ENCODE measurements at regions of chr4 and their contacts with region 1.

Region 1: GRCh38 chr4:16196478-16197393 is 29.5 kb downstream of the TAPT1 start:
- DNase-seq: no peak
- CTCF ChIP-seq: peak; percentile 33

Region 2: GRCh38 chr4:16183604-16184003 is 13.1 kb before region 1 on chr4:
- CTCF ChIA-PET with region 1: interaction called, 12 read pairs
- POLR2A ChIA-PET with region 1: no interaction called
- DNase-seq: no peak
- CTCF ChIP-seq: no peak

Region 3: DNA sequence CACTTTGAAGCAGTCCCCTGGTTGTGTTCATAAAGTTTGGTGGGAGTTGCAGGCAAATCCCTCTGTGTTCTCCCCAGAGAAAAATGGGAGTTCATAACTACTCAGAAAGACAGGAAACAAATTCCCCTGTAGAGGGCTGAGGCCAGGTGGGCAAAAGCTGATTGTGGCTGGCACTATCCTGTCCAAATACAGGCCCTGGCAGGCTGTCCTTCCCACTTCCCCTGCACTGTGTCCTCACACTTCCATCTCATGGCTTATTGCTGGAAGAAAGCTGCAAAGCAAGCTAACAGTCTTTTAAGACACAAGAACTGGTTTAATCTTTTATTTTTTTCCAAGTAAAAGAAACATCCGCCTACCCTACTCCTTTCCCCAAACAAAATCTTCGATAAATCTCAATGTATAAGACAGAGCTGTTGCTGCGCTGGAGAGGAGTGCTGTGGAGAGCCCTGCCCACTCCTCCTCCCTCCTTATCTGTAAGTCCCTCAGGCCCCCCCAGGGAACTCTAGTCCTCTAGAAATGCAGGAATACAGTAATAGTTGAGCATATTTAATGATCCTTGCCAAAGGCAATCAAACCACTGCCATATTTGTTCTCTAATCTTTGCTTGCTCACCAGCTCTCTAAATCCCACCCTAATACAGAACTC is 15.5 kb after region 1 on chr4:
- CTCF ChIA-PET with region 1: interaction called, 42 read pairs
- POLR2A ChIA-PET with region 1: no interaction called
- DNase-seq: no peak
- CTCF ChIP-seq: no peak

Measured in GM10248 (cell line).